CD4-positive, alpha-beta T cell (primary cell): ENCODE measurements at regions of chr19 and their contacts with region 1.

Region 1: DNA sequence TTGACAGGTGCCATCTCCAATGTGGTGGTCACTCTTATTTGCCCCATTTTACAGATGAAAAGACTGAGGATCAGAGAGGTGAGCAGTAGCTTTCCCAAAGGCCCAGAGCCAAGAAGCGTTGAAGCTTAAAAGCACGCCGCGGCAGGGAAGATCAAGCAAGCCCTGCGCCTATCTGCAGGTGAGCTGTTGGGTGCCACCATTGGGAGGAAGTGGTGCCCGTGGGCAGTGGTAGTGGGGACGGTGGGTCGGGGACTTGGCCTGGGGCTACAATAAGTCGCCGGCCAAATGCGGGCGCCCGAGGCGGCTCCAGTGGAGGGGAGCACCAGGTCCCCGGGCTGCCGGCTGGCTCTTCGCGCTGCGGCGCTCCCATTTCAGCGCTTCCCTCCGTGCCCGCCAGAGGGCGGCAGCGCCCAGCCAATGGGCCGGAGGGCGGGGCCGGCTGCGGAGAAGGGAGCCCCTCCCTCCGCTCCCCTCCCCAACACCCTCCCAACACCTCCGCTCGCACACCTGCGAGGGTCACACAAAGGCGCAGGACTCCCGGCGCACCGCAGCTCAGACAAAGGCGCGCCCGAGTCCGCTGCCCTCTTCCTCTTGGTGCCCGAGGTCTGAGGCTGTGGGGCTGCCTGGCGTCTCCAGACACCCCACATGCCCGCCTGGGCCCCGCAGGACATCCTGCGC is 744 bp upstream of the POU2F2 start:
- DNase-seq: peak; percentile 71 to 92 (median 84)
- ATAC-seq: peak; percentile 72
- H3K4me3 ChIP-seq: peak overlapping the region; percentile 63
- H3K4me3 Mint-ChIP-seq: peak overlapping the region; percentile 89
- H3K27ac ChIP-seq: peak overlapping the region; percentile 71 to 76
- H3K27ac Mint-ChIP-seq: peak overlapping the region; percentile 71
- H3K4me1 ChIP-seq: peaks cover 78% of the 10 kb centered on the region
- H3K4me1 Mint-ChIP-seq: peaks cover 72% of the 10 kb centered on the region
- H3K27me3 ChIP-seq: no peaks in the 10 kb centered on the region
- H3K27me3 Mint-ChIP-seq: no peaks in the 10 kb centered on the region
- CTCF ChIP-seq: peak; percentile 97

Region 2: GRCh38 chr19:42176990-42177685 is 44.1 kb after region 1 on chr19:
- CTCF ChIA-PET with region 1: interaction called, 4 read pairs
- POLR2A ChIA-PET with region 1: interaction called, 4 read pairs
- intact Hi-C with region 1: loop called in 1 of 2 experiments (anchors 1 kb)
- DNase-seq: peak; percentile 61 to 91 (median 72)
- ATAC-seq: peak; percentile 95
- H3K4me3 ChIP-seq: peak overlapping the region; percentile 56
- H3K4me3 Mint-ChIP-seq: no peak overlapping the region
- H3K27ac ChIP-seq: no peak overlapping the region
- H3K27ac Mint-ChIP-seq: no peak overlapping the region
- H3K4me1 ChIP-seq: peaks cover 34% of the 10 kb centered on the region
- H3K4me1 Mint-ChIP-seq: peaks cover 25% of the 10 kb centered on the region
- H3K27me3 ChIP-seq: peaks cover 36 to 37% of the 10 kb centered on the region in 2 experiments
- H3K27me3 Mint-ChIP-seq: peaks cover 35% of the 10 kb centered on the region
- CTCF ChIP-seq: peak; percentile 35

Region 3: DNA sequence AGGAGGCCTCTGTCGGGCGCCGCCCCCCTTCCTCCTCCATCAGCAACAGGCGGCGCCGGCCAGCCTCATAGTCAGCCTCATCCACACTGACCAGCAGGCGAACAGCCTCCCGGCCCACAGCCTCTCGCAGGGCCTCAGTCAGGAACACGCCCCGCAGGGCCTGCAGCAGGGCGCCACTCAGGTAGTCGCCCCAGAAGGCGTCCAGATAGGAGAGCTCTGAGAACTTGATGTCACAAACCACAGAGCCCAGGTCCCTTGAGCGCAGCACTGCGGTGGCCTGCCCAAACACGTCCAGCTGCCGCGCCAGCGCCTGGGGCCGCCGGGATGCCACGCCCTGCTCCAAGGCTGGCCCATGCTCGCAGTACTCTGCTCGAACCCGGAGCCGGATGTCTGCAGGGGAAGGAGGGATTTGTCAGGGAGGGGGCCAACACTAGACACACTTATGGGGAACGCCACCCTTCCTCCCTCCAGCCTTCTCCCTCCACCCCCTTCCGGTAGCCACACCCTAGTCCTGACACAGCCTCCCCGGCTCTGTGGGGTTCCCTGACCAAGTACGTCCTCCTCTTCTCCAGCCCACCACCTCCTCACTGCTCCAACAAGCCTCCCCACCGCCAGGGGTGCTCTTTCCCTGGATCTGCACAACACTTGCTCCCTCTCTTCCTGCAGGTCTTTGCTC is 66.6 kb after region 1 on chr19:
- CTCF ChIA-PET with region 1: interaction called, 5 read pairs
- POLR2A ChIA-PET with region 1: interaction called, 15 read pairs
- intact Hi-C with region 1: no loop called
- DNase-seq: peak in 10 of 14 experiments; percentile 28 to 89 (median 56)
- ATAC-seq: peak; percentile 47
- H3K4me3 ChIP-seq: peak overlapping the region; percentile 57
- H3K4me3 Mint-ChIP-seq: peak overlapping the region; percentile 83
- H3K27ac ChIP-seq: peak overlapping the region; percentile 89 to 94
- H3K27ac Mint-ChIP-seq: peak overlapping the region; percentile 93
- H3K4me1 ChIP-seq: peaks cover 95% of the 10 kb centered on the region
- H3K4me1 Mint-ChIP-seq: peaks cover 83% of the 10 kb centered on the region
- H3K27me3 ChIP-seq: no peaks in the 10 kb centered on the region
- H3K27me3 Mint-ChIP-seq: no peaks in the 10 kb centered on the region
- CTCF ChIP-seq: peak; percentile 10

Region 4: DNA sequence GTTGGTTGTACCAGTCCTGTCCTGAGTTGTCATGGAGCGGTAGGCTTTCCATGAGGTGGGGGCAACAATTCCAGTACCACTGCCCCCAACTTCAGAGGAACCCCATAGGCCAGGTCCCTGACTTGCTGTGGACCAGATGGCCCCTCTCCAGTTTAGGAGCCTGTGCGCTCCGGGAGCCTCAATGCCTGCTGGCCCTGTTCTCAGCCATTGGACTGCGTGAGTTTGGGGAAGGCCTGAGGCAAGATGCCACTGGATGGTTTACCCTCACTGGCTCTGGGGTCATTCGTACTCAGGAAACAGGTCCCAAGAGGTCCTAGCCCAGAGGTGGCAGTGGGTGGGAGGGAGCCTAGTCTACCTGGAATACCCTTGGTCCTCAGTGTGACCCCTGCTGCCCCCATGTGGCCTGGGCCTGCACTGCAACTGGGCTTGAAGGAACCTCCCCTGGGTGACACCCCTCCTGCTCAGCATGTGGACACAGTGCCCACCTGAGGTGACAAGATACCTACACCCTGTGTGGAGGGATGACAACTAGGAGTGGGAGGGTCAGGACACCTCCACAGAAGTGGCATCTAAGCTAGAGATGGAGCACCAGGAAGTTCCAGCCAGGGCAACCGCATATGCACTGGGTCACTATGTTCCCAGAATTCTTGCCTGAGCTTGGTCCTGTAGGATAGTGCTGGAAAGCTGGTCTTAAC is 163.0 kb after region 1 on chr19:
- CTCF ChIA-PET with region 1: interaction called, 6 read pairs
- POLR2A ChIA-PET with region 1: interaction called, 3 read pairs
- intact Hi-C with region 1: loop called (anchors 1 to 2 kb)
- DNase-seq: peak; percentile 85 to 95 (median 88)
- ATAC-seq: peak; percentile 95
- H3K4me3 ChIP-seq: no peak overlapping the region
- H3K4me3 Mint-ChIP-seq: peak overlapping the region; percentile 54
- H3K27ac ChIP-seq: no peak overlapping the region
- H3K27ac Mint-ChIP-seq: peak overlapping the region; percentile 28
- H3K4me1 ChIP-seq: peaks cover 24% of the 10 kb centered on the region
- H3K4me1 Mint-ChIP-seq: peaks cover 15% of the 10 kb centered on the region
- H3K27me3 ChIP-seq: no peaks in the 10 kb centered on the region
- H3K27me3 Mint-ChIP-seq: no peaks in the 10 kb centered on the region
- CTCF ChIP-seq: peak; percentile 98